Activated naive CD4-positive, alpha-beta T cell treated with anti-CD3 and anti-CD28 coated beads for 36 hours (primary cell): ENCODE measurements at regions of chr5 and their contacts with region 1.

Region 1: DNA sequence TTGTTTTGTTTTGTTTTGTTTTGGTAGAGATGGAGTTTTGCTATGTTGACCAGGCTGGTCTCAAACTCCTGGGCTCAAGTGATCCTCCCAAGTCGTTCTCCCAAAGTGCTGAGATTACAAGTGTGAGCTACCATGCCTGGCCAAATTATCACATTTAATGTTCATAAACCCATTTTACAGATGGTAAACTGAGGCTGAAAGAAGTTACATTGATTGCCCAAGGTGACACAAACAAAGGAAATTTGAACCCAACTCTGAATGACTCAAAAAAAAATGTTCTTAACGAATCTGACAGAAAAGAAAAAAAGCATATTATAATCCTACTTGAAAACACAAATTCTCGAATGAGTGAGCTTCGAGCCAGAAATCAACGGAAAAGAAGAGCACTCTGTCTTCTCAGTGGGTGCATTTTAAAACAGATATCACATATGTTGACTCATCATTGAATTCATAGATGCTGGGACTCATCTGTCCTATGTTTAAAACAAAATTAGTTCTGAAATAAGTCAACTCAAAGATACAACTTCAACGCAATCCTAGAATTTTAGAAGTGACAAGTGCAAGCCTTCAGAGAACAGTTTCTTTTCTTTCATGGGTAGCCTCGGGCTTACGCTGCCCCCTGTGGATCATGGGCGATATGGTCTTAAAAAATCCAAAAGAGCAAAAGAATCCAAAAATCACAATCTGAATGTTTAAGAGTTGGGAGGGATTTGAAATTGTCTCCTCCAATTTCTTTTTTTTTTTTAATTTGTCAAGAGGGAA is 28.4 kb downstream of the TIMD4 start:
- DNase-seq: peak; percentile 88
- H3K4me3 Mint-ChIP-seq: peak overlapping the region; percentile 22
- H3K27ac Mint-ChIP-seq: peak overlapping the region; percentile 92
- H3K4me1 Mint-ChIP-seq: peaks cover 47% of the 10 kb centered on the region
- H3K27me3 Mint-ChIP-seq: no peaks in the 10 kb centered on the region

Region 2: DNA sequence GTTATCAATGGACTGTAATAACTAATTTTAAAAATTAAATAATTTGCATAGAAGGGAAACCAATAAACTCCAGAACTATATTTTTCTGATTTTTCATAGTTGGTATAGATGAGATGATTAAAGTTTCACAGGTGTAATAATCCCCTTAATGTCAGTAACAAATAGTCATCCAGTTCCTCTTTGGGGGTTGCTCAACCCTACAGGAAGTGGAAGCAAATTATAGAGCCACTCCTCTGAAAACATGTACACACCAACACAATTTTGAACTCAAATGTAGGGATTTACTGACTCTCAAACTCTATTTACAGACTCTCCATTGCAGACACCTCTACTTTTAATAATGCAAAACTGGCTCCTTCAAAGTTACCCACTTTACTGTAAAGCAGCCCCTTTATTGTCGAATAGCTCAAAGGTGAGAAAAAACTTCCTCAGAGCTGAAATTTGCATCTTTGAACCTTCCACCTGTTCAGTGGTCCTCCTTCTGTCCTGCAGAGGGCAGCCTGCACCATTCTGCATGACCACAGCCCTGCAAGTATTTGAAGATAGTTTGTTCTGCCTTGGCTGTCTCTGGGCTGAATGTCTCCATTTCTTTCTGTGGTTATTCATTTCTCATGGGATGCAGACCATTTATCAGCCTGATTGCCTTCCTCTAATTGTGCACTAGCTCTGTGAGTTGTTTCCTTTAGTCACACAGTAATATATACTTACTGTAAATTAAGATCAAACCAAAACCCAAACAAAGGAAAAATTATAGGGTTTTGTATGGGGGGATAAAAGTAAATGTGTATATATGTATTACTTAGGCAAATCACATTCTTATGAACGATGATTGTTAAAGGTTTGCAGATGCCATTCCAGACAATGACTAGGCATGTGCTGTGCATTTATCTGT is 990.9 kb before region 1 on chr5:
- CTCF ChIA-PET with region 1: no interaction called
- intact Hi-C with region 1: loop called (anchors 2 kb)
- DNase-seq: peak; percentile 62
- H3K4me3 Mint-ChIP-seq: no peak overlapping the region
- H3K27ac Mint-ChIP-seq: no peak overlapping the region
- H3K4me1 Mint-ChIP-seq: no peaks in the 10 kb centered on the region
- H3K27me3 Mint-ChIP-seq: peaks cover 10% of the 10 kb centered on the region

Region 3: GRCh38 chr5:156718985-156719384 is 215.6 kb before region 1 on chr5:
- CTCF ChIA-PET with region 1: no interaction called
- intact Hi-C with region 1: loop called (anchors 2 kb)
- DNase-seq: peak; percentile 11
- H3K4me3 Mint-ChIP-seq: no peak overlapping the region
- H3K27ac Mint-ChIP-seq: no peak overlapping the region
- H3K4me1 Mint-ChIP-seq: no peaks in the 10 kb centered on the region
- H3K27me3 Mint-ChIP-seq: no peaks in the 10 kb centered on the region

Region 4: GRCh38 chr5:156835905-156836304 is 98.7 kb before region 1 on chr5:
- CTCF ChIA-PET with region 1: interaction called, 4 read pairs
- intact Hi-C with region 1: loop called (anchors 1 kb)
- DNase-seq: peak; percentile 6
- H3K4me3 Mint-ChIP-seq: no peak overlapping the region
- H3K27ac Mint-ChIP-seq: no peak overlapping the region
- H3K4me1 Mint-ChIP-seq: peaks cover 4% of the 10 kb centered on the region
- H3K27me3 Mint-ChIP-seq: no peaks in the 10 kb centered on the region

Region 5: GRCh38 chr5:156907667-156908066 is 27.0 kb before region 1 on chr5:
- CTCF ChIA-PET with region 1: no interaction called
- intact Hi-C with region 1: no loop called
- DNase-seq: no peak
- H3K4me3 Mint-ChIP-seq: no peak overlapping the region
- H3K27ac Mint-ChIP-seq: no peak overlapping the region
- H3K4me1 Mint-ChIP-seq: peaks cover 29% of the 10 kb centered on the region
- H3K27me3 Mint-ChIP-seq: no peaks in the 10 kb centered on the region